ENCODE measurements at regions of chr2 and their contacts with region 1.

Region 1: DNA sequence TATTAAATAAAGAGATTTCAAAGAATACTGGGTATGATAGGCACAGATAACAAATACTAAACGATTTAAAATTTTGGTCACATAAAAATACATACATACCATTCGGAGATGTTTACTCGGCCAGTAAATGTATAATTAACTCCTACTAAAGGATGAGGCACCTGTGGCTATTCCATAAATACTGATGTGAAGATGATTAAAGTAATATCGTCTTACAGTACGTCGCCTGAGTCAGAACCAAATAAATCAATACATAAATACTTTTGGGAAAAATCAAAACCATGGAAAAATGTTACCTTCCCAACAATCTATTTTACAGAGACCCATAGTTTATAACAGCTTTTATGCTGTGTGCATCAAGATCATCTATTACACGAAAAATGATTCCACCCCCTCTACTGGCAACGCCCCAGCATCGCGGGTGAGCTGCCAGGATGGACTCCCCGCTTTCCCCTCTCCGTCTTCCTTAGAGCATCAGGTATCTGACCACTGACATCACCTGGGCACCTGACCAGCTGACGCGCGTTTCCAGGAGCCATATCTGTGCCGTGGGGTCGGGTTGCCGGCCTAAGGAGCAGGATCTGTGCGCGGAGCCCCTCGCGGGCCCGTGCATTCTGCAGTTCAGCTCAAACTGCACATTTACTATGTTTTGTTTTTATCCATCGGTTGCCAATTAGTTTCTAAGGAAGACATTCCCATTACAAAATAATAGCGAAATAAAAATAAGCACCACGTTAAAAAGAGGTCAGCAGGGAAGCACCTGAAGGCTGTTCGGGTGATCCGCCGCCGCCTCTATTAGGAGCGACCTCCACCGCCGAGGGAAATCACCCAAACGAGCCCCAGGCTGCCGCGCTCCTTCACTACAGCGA is 901 bp downstream of the ICA1L start:
- DNase-seq: peak; percentile 81
- H3K4me3 ChIP-seq: peak overlapping the region; percentile 56 to 68 (median 65)
- H3K27ac ChIP-seq: peak overlapping the region; percentile 2
- H3K4me1 ChIP-seq: peaks cover 6% of the 10 kb centered on the region
- H3K27me3 ChIP-seq: no peaks in the 10 kb centered on the region
- CTCF ChIP-seq: peak; percentile 58 to 63
- POLR2A ChIP-seq: no peak

Region 2: GRCh38 chr2:202577250-202578183 is 293.1 kb before region 1 on chr2:
- CTCF ChIA-PET with region 1: interaction called, 5 read pairs
- POLR2A ChIA-PET with region 1: no interaction called
- dilution Hi-C with region 1: no loop called
- intact Hi-C with region 1: loop called (anchors 2 kb)
- DNase-seq: no peak
- H3K4me3 ChIP-seq: no peak overlapping the region
- H3K27ac ChIP-seq: no peak overlapping the region
- H3K4me1 ChIP-seq: no peaks in the 10 kb centered on the region
- H3K27me3 ChIP-seq: no peaks in the 10 kb centered on the region
- CTCF ChIP-seq: no peak
- POLR2A ChIP-seq: no peak

Region 3: DNA sequence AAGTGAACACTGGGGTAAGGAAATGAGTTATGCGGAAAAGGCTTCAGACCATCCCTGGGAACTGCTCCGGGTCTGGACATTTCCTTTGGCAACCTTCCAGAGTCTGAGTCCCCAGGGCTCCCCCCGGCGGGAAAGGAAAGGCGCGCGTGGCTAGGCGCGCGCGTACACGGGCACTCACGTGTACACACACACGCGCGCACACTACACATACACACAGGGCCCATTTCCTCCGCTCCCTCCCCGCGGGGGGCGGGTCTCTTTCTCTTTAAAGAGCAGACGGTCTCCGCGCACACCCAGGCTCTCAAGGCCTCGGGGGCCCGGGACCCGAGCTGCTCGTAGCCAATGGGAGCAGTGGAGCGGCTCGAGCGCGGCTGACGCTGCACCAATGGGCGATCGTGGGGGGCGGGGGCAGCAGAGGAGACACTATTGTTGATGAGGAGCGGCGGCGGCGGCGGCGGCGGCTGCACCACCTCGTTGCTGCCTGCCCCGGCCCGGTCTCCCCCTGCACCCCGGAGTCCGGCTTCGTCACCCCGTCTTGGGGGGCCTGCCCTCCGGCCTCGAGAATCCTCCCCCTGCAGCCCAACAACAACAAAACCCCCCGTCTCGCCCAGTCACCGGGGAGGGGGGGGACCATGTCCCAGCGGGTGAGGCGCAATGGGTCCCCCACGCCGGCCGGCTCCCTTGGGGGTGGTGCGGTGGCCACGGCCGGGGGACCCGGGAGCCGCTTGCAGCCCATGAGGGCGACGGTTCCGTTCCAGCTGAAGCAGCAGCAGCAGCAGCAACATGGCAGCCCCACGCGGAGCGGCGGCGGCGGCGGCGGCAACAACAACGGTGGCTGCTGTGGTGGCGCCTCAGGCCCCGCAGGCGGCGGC is 235.9 kb before region 1 on chr2 and contains the start of gene FAM117B:
- CTCF ChIA-PET with region 1: interaction called, 11 read pairs
- POLR2A ChIA-PET with region 1: interaction called, 4 read pairs
- dilution Hi-C with region 1: no loop called
- intact Hi-C with region 1: loop called (anchors 1 kb)
- DNase-seq: peak; percentile 96
- H3K4me3 ChIP-seq: peak within 1 kb of the TSS; percentile 65 to 85 (median 70)
- H3K27ac ChIP-seq: peak within 1 kb of the TSS; percentile 34
- H3K4me1 ChIP-seq: peaks cover 17% of the 10 kb centered on the region
- H3K27me3 ChIP-seq: no peaks in the 10 kb centered on the region
- CTCF ChIP-seq: peak in 1 of 2 donors; percentile 6
- POLR2A ChIP-seq: no peak
- total RNA-seq, gene FAM117B: 5.7 and 7.0 TPM in 2 replicates

Region 4: GRCh38 chr2:202911512-202912341 is 41.1 kb after region 1 on chr2 and contains the starts of genes CARF and WDR12:
- CTCF ChIA-PET with region 1: interaction called, 3 read pairs
- POLR2A ChIA-PET with region 1: no interaction called
- dilution Hi-C with region 1: no loop called
- intact Hi-C with region 1: loop called (anchors 2 kb)
- DNase-seq: peak; percentile 96
- H3K4me3 ChIP-seq: peak within 1 kb of the TSS; percentile 84 to 97 (median 97)
- H3K27ac ChIP-seq: peak within 1 kb of the TSS; percentile 86
- H3K4me1 ChIP-seq: peaks cover 7% of the 10 kb centered on the region
- H3K27me3 ChIP-seq: no peaks in the 10 kb centered on the region
- CTCF ChIP-seq: no peak
- POLR2A ChIP-seq: peak; percentile 78
- total RNA-seq, gene CARF: 3.2 and 3.7 TPM in 2 replicates
- total RNA-seq, gene WDR12: 65.6 and 67.1 TPM in 2 replicates

Region 5: DNA sequence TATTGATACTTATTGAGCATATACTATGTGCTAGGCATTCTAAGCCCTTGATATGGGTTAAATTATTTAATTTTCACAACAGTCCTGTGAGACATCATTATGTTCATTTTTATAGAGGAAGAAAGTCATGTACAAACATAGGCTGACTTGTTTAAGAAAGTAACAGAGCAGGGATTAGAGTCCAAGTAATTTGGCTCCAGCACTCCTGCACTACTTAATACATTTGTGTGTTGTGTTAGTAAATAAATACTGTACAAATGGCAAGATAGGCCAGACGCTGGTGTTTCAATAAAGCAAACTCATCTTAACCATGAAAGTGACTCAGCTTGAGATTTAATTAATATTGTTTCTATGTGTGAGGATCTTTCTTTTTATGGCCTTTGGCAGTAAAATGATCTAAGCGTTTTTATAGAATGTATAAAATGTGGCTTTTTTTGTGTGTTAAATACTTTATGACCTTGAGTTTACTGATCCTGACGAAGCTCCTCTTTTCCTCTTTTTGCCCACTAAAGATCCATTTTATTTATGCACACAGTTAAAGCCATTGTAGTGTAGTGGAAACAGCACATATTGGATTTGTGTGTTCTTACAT is 165.3 kb after region 1 on chr2:
- CTCF ChIA-PET with region 1: no interaction called
- POLR2A ChIA-PET with region 1: no interaction called
- dilution Hi-C with region 1: no loop called
- intact Hi-C with region 1: no loop called
- DNase-seq: no peak
- H3K4me3 ChIP-seq: no peak overlapping the region
- H3K27ac ChIP-seq: no peak overlapping the region
- H3K4me1 ChIP-seq: no peaks in the 10 kb centered on the region
- H3K27me3 ChIP-seq: no peaks in the 10 kb centered on the region
- CTCF ChIP-seq: no peak
- POLR2A ChIP-seq: no peak

Region 6: DNA sequence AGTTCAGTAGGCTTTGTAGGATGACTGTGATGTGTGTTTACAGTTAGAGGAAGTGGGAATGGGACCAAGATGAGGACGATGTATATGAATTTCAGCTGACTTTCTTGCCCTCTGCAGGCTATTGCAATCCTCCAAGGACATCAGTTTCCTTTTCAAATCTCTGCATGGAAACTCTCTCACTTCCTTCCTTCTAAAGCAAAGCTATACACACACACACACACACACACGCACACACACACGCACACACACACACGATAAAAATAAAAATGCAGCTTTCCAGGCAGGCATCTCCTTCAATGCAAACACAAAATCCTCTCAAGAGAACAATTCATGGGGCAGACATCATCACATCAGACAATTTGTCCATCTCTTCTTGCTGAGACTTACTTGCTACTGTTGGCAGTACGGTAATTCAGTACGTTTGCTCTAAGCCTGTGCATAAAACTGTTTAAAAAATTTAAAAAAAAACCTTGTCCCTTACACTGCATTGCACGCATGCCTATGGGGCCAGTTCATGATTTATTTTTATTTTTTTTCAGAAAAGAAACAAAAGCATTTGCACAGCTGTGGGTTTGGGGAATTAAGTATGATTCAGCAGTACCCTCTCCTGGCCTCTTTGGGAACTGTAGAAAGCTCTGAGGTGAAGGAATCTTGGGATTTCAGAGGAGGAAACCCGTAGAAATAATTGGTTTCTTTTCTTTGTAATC is 1038.7 kb after region 1 on chr2:
- CTCF ChIA-PET with region 1: interaction called, 3 read pairs
- POLR2A ChIA-PET with region 1: no interaction called
- dilution Hi-C with region 1: no loop called
- intact Hi-C with region 1: loop called (anchors 5 kb)
- DNase-seq: peak; percentile 74
- H3K4me3 ChIP-seq: peak overlapping the region in 1 of 3 experiments; percentile 47
- H3K27ac ChIP-seq: no peak overlapping the region
- H3K4me1 ChIP-seq: peaks cover 8% of the 10 kb centered on the region
- H3K27me3 ChIP-seq: no peaks in the 10 kb centered on the region
- CTCF ChIP-seq: peak; percentile 57 to 59
- POLR2A ChIP-seq: no peak

Measured in endothelial cell of umbilical vein (primary cell).